CD8-positive, alpha-beta T cell (primary cell): ENCODE measurements at regions of chr19 and their contacts with region 1.

Region 1: GRCh38 chr19:39970675-39971379 is at the start of gene PSMC4:
- DNase-seq: peak; percentile 97 to 100 (median 98)
- ATAC-seq: peak; percentile 98
- H3K4me3 ChIP-seq: peak within 1 kb of the TSS; percentile 85 to 87
- H3K4me3 Mint-ChIP-seq: peak within 1 kb of the TSS; percentile 99
- H3K27ac ChIP-seq: peak within 1 kb of the TSS; percentile 94 to 96
- H3K27ac Mint-ChIP-seq: peak within 1 kb of the TSS; percentile 99
- H3K4me1 ChIP-seq: peaks cover 31% of the 10 kb centered on the region
- H3K4me1 Mint-ChIP-seq: peaks cover 51% of the 10 kb centered on the region
- H3K27me3 ChIP-seq: no peaks in the 10 kb centered on the region
- H3K27me3 Mint-ChIP-seq: no peaks in the 10 kb centered on the region
- CTCF ChIP-seq: peak; percentile 82
- total RNA-seq, gene PSMC4: 75.9 to 79.0 TPM

Region 2: DNA sequence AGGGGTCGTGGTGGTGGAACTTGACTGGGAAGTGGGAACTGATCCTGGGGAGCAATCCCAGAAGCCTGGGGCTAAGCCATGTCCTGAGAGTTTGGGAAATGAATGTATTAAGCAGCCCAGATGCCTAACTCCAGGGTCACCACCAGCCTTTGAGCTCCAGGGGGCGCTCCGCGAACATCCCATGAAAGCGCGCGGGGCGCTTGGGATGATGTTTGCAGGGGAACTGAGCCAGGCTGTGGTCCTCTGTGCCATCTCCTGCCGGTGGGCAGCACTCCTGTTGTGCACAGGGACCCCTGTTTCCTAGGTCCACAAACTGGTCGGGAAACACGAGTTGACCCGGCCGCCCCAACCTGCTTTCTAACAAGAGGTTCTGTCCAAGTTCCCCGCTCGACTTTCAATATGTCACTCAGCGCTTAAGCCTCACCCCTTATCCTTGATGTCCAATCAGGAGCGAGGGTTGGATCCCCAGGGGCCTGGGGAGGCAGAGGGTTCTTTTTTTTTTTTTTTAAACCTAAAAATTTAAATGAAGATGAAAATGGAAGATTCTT is 177.8 kb before region 1 on chr19:
- CTCF ChIA-PET with region 1: interaction called, 15 read pairs
- POLR2A ChIA-PET with region 1: interaction called, 4 read pairs
- intact Hi-C with region 1: loop called in 1 of 2 experiments (anchors 1 kb)
- DNase-seq: peak; percentile 52 to 83 (median 74)
- ATAC-seq: peak; percentile 94
- H3K4me3 ChIP-seq: peak overlapping the region; percentile 53 to 74
- H3K4me3 Mint-ChIP-seq: peak overlapping the region; percentile 76
- H3K27ac ChIP-seq: no peak overlapping the region
- H3K27ac Mint-ChIP-seq: no peak overlapping the region
- H3K4me1 ChIP-seq: no peaks in the 10 kb centered on the region
- H3K4me1 Mint-ChIP-seq: peaks cover 2% of the 10 kb centered on the region
- H3K27me3 ChIP-seq: no peaks in the 10 kb centered on the region
- H3K27me3 Mint-ChIP-seq: peaks cover 5% of the 10 kb centered on the region
- CTCF ChIP-seq: peak; percentile 85

Region 3: GRCh38 chr19:39805104-39805503 is 165.7 kb before region 1 on chr19:
- CTCF ChIA-PET with region 1: no interaction called
- POLR2A ChIA-PET with region 1: no interaction called
- intact Hi-C with region 1: no loop called
- DNase-seq: no peak
- ATAC-seq: no peak
- H3K4me3 ChIP-seq: no peak overlapping the region
- H3K4me3 Mint-ChIP-seq: no peak overlapping the region
- H3K27ac ChIP-seq: no peak overlapping the region
- H3K27ac Mint-ChIP-seq: no peak overlapping the region
- H3K4me1 ChIP-seq: no peaks in the 10 kb centered on the region
- H3K4me1 Mint-ChIP-seq: no peaks in the 10 kb centered on the region
- H3K27me3 ChIP-seq: no peaks in the 10 kb centered on the region
- H3K27me3 Mint-ChIP-seq: peaks cover 16% of the 10 kb centered on the region
- CTCF ChIP-seq: no peak

Region 4: DNA sequence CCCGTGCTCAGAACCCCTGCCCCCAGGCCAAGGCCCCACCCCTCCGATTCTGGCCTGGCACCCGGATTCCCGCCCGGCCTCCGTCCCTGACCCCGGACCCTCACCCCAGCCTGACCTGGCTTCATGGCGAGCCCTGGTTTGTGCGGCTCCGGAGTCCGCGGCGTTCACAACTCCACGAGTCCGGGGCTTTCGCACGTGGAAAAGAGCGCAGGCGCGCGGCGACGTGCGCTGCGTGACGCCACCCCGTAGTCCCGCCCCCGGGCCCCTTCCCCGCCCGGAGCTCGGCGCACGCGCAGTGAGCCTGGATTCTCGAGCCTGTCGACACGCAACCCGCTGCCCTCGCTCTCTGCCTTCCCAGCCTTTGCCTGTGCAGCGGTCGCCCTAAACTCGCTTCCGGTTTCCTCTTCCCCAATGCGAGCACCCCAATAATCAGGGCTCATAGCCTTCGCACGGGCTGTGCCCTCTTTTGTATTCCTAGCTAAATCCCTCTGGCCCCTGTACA is 124.6 kb before region 1 on chr19 and contains the start of gene FBL:
- CTCF ChIA-PET with region 1: interaction called, 11 read pairs
- POLR2A ChIA-PET with region 1: interaction called, 3 read pairs
- intact Hi-C with region 1: no loop called
- DNase-seq: peak; percentile 94 to 99 (median 98)
- ATAC-seq: peak; percentile 94
- H3K4me3 ChIP-seq: peak within 1 kb of the TSS; percentile 86 to 87
- H3K4me3 Mint-ChIP-seq: peak within 1 kb of the TSS; percentile 87
- H3K27ac ChIP-seq: peak within 1 kb of the TSS; percentile 71 to 84
- H3K27ac Mint-ChIP-seq: peak within 1 kb of the TSS; percentile 96
- H3K4me1 ChIP-seq: peaks cover 39% of the 10 kb centered on the region
- H3K4me1 Mint-ChIP-seq: peaks cover 48% of the 10 kb centered on the region
- H3K27me3 ChIP-seq: no peaks in the 10 kb centered on the region
- H3K27me3 Mint-ChIP-seq: no peaks in the 10 kb centered on the region
- CTCF ChIP-seq: no peak
- total RNA-seq, gene FBL: 351 to 365 TPM

Region 5: DNA sequence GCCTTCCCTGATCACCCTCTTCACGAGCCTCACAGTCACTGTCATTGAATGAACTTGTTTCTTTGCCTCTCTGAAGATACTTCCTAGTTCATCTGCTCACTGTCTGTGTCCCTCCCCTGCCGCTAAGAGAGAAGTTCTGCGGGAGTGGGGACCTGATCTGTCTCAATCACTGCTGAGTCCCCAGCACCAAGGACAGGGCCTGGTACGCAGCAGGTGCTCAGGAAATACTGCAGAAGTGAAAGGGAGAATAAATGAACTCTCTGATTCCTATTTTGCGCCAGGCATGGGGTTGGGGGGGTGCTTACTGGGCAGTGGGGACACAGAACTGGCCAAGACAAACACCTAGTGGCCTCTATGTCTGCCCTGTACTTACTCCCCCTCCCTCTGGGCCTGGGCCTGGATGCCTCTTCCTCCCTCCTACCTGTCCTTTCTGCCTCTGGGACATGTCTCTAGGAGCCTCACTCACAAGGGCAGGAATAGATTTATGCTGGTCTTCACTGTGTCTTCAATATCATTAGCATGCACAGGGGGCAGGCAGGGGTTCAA is 53.9 kb before region 1 on chr19:
- CTCF ChIA-PET with region 1: interaction called, 25 read pairs
- POLR2A ChIA-PET with region 1: interaction called, 6 read pairs
- intact Hi-C with region 1: loop called (anchors 5 to 10 kb)
- DNase-seq: no peak
- ATAC-seq: no peak
- H3K4me3 ChIP-seq: no peak overlapping the region
- H3K4me3 Mint-ChIP-seq: no peak overlapping the region
- H3K27ac ChIP-seq: no peak overlapping the region
- H3K27ac Mint-ChIP-seq: no peak overlapping the region
- H3K4me1 ChIP-seq: no peaks in the 10 kb centered on the region
- H3K4me1 Mint-ChIP-seq: peaks cover 19% of the 10 kb centered on the region
- H3K27me3 ChIP-seq: no peaks in the 10 kb centered on the region
- H3K27me3 Mint-ChIP-seq: no peaks in the 10 kb centered on the region
- CTCF ChIP-seq: no peak

Region 6: GRCh38 chr19:39951686-39952085 is 19.1 kb before region 1 on chr19:
- CTCF ChIA-PET with region 1: interaction called, 90 read pairs
- POLR2A ChIA-PET with region 1: interaction called, 46 read pairs
- intact Hi-C with region 1: loop called (anchors 1 to 2 kb)
- DNase-seq: peak in 2 of 9 experiments; percentile 39 to 48
- ATAC-seq: no peak
- H3K4me3 ChIP-seq: peak overlapping the region; percentile 44 to 58
- H3K4me3 Mint-ChIP-seq: peak overlapping the region; percentile 84
- H3K27ac ChIP-seq: peak overlapping the region; percentile 55 to 81
- H3K27ac Mint-ChIP-seq: peak overlapping the region; percentile 99
- H3K4me1 ChIP-seq: peaks cover 83% of the 10 kb centered on the region
- H3K4me1 Mint-ChIP-seq: peaks cover 81% of the 10 kb centered on the region
- H3K27me3 ChIP-seq: no peaks in the 10 kb centered on the region
- H3K27me3 Mint-ChIP-seq: no peaks in the 10 kb centered on the region
- CTCF ChIP-seq: no peak

Region 7: GRCh38 chr19:40190891-40191835 is 220.3 kb after region 1 on chr19 and contains the start of gene MAP3K10:
- CTCF ChIA-PET with region 1: interaction called, 4 read pairs
- POLR2A ChIA-PET with region 1: no interaction called
- intact Hi-C with region 1: loop called in 1 of 2 experiments (anchors 1 kb)
- DNase-seq: peak; percentile 41 to 86 (median 70)
- ATAC-seq: peak; percentile 79
- H3K4me3 ChIP-seq: peak within 1 kb of the TSS; percentile 82 to 100
- H3K4me3 Mint-ChIP-seq: peak within 1 kb of the TSS; percentile 91
- H3K27ac ChIP-seq: peak within 1 kb of the TSS; percentile 81 to 90
- H3K27ac Mint-ChIP-seq: peak within 1 kb of the TSS; percentile 91
- H3K4me1 ChIP-seq: peaks cover 16% of the 10 kb centered on the region
- H3K4me1 Mint-ChIP-seq: peaks cover 34% of the 10 kb centered on the region
- H3K27me3 ChIP-seq: no peaks in the 10 kb centered on the region
- H3K27me3 Mint-ChIP-seq: no peaks in the 10 kb centered on the region
- CTCF ChIP-seq: no peak
- total RNA-seq, gene MAP3K10: 26.4 to 27.7 TPM